Psoas muscle (tissue), 8 donors: ENCODE measurements at regions of chr18 and their contacts with region 1.

Region 1: GRCh38 chr18:799943-800342 is 12.1 kb downstream of the YES1 start:
- DNase-seq: no peak
- ATAC-seq: no peak
- H3K4me3 ChIP-seq: no peak overlapping the region
- H3K27ac ChIP-seq: no peak overlapping the region
- H3K4me1 ChIP-seq: no peaks in the 10 kb centered on the region
- H3K27me3 ChIP-seq: no peaks in the 10 kb centered on the region
- CTCF ChIP-seq: no peak

Region 2: DNA sequence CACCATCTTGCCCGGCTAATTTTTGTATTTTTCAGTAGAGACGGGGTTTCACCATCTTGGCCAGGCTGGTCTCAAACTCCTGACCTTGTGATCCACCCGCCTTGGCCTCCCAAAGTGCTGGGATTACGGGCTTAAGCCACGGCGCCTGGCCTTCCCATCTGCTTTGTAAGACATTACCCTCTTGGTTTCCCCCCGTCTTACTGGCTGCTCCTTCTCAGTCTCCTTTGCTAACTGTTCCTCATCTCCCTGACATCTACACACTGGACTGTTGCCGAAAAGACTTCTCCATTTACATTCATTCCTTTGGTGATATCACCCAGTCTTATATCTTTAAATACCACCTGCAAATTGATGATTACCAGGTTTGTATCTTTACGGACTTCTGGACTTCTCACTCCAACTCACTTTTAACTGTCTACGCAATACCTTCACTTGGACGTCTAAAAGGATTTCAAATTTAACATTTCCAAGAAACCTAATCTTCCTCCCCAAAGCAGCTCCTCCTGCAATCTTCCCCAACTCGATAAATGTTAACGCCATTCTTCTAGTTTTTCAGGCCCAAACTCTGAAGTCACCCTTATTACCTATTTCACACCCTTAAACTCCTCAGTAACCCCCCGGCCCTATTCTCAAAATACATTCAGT is 25.8 kb before region 1 on chr18:
- intact Hi-C with region 1: loop called in 1 of 2 experiments (anchors 2 kb)
- DNase-seq: no peak
- ATAC-seq: no peak
- H3K4me3 ChIP-seq: no peak overlapping the region
- H3K27ac ChIP-seq: no peak overlapping the region
- H3K4me1 ChIP-seq: peaks cover 9% of the 10 kb centered on the region
- H3K27me3 ChIP-seq: no peaks in the 10 kb centered on the region
- CTCF ChIP-seq: no peak